Activated T-helper 1 cell treated with anti-CD3 and anti-CD28 coated beads, Interleukin-12 subunit alpha, Interleukin-12 subunit beta, Interleukin-2, Interleukin-4 antibody, amounts not matched to agents 30 ng/mL and 10 ng/mL and 1 ng/mL, durations not matched to agents 14 hours and 24 hours and 36 hours (primary cell): ENCODE measurements at regions of chr11 and their contacts with region 1.

Region 1: DNA sequence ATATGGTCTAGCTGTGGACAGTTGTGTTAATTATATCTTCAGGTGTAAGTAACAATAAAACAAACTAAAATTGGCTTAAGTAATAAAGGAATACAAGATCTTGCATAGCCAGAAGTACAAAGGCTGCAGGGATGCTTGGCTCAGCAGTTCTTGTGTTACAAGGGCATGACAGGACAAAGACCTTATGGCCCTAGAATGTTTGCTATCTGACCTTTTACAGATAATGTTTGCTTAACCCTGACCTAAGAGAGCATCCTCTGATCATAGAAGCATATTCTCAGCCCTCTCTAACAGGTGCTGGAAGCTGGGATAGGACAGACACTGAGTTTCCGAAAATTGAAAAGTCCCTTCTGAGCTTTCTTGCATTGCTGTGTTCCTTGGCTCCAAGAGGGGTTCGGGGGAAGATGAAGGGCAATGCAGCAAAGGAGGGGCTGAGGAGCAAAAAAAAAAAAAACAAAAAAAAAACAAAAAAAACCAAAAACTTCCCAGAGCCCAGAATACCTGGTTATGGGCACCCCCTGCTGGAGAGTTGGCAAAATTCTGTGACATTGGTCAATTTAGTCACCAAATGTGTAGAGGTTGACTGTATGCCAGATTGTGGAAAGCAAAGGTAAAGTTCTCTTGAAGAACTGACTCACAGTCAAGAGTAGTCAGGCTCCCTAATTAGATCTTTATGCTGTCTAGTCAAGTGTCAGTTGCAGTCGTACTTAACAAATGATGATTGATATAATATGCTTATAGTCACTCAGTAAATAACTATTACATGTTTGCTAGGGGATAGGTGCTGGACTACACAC is 10.4 kb upstream of the HIKESHI start:
- DNase-seq: peak; percentile 39
- H3K4me3 Mint-ChIP-seq: peak overlapping the region; percentile 34
- H3K27ac Mint-ChIP-seq: peak overlapping the region; percentile 82
- H3K4me1 Mint-ChIP-seq: peaks cover 61% of the 10 kb centered on the region
- H3K27me3 Mint-ChIP-seq: no peaks in the 10 kb centered on the region

Region 2: GRCh38 chr11:85826116-85826855 is 465.4 kb before region 1 on chr11:
- intact Hi-C with region 1: loop called (anchors 1 kb)
- DNase-seq: no peak
- H3K4me3 Mint-ChIP-seq: peak overlapping the region; percentile 1
- H3K27ac Mint-ChIP-seq: peak overlapping the region; percentile 87
- H3K4me1 Mint-ChIP-seq: peaks cover 74% of the 10 kb centered on the region
- H3K27me3 Mint-ChIP-seq: no peaks in the 10 kb centered on the region

Region 3: GRCh38 chr11:86041975-86042378 is 249.7 kb before region 1 on chr11:
- intact Hi-C with region 1: loop called (anchors 1 kb)
- DNase-seq: peak; percentile 48
- H3K4me3 Mint-ChIP-seq: peak overlapping the region; percentile 43
- H3K27ac Mint-ChIP-seq: peak overlapping the region; percentile 71
- H3K4me1 Mint-ChIP-seq: peaks cover 63% of the 10 kb centered on the region
- H3K27me3 Mint-ChIP-seq: no peaks in the 10 kb centered on the region

Region 4: GRCh38 chr11:86138958-86139357 is 152.7 kb before region 1 on chr11:
- intact Hi-C with region 1: loop called (anchors 1 kb)
- DNase-seq: peak; percentile 37
- H3K4me3 Mint-ChIP-seq: peak overlapping the region; percentile 57
- H3K27ac Mint-ChIP-seq: peak overlapping the region; percentile 81
- H3K4me1 Mint-ChIP-seq: peaks cover 75% of the 10 kb centered on the region
- H3K27me3 Mint-ChIP-seq: no peaks in the 10 kb centered on the region

Region 5: DNA sequence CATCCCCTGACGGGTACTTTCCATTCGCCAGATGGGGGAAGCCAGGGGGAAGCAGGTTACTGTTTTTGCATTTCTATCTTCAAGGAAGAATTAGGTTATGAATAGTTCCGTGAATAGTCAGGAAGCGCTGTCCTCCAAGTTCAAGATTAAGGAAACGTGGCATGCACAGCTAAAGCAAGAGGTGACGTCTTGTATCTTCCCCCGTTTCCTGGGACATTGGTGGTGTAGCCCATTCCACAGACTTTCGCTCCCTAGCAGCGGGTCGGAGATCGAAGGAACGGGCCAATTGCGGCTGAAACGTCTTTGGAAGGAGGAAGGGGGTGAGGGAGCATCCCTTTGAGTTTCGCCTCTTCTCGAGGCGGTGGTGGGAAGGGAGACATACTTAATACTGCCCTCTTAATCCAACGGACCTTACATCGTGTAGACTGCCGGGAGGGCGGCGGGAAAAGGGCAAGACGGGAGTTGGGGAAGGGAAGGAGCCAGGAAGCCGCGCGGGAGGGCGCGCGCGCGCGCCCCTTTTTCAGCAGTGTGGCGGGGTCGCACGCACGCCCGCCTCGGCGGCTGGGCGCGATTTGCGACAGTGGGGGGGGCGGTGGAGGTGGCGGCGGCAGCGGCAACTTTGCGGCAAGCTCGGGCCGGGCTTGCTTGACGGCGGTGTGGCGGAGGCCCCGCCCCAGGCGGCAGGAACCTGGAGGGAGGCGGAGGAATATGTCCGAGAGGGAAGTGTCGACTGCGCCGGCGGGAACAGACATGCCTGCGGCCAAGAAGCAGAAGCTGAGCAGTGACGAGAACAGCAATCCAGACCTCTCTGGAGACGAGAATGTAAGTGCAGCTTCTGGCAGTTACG is 46.9 kb before region 1 on chr11 and contains the start of gene EED:
- intact Hi-C with region 1: loop called (anchors 1 kb)
- DNase-seq: peak; percentile 93
- H3K4me3 Mint-ChIP-seq: no peak within 1 kb of the TSS
- H3K27ac Mint-ChIP-seq: no peak within 1 kb of the TSS
- H3K4me1 Mint-ChIP-seq: peaks cover 43% of the 10 kb centered on the region
- H3K27me3 Mint-ChIP-seq: no peaks in the 10 kb centered on the region
- total RNA-seq, gene EED: 279 and 294 TPM in 2 replicates

Region 6: DNA sequence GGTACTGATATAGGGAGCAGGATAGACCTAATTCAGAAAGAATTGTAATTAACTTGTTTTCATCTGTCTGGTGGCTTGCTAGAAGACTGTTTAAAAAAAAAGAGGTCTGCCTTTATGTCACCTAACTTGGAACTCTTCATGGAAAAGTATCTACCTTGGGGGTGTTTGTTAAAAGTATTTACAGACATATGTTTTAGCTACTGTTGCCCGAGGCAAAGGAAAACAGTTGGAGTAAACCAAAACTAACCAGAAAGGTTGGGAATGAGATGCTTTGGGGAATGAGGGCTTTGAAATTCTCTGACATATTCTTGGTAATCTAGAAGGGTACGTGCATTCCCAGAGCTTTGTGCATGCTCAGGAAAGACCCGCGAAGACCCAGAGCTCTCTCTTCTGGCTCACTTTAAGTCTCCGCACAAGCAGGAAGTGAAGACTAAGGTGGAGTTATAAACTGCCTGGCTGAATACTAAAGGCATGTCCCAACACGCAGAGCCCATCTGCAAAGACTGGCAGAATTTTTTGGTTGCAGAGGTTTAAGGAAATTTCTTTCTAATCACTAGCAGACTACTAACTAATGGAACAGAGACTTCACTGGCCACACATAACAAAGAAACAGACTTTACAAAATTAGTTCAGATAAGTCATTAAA is 43.6 kb after region 1 on chr11:
- intact Hi-C with region 1: no loop called
- DNase-seq: no peak
- H3K4me3 Mint-ChIP-seq: no peak overlapping the region
- H3K27ac Mint-ChIP-seq: no peak overlapping the region
- H3K4me1 Mint-ChIP-seq: no peaks in the 10 kb centered on the region
- H3K27me3 Mint-ChIP-seq: no peaks in the 10 kb centered on the region

Region 7: DNA sequence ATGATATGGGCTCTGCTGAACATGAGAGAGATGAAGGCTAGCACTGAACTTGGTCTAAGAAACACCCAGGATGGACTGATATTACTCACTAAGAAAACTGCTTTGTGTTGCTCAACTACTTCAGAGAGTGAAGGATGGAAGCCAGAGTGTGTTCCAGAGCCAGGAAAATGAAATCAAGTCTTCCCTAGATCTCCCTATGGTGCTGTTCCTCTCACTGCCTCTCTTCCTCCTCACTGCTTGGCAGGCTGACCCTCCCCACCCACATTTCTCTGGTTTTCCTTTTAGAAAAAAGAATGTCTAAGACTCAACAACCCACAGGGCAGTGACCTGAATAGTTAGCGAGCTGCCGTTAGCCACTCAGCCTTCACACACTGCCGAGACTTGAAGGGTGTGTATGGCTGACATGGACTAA is 148.6 kb after region 1 on chr11:
- intact Hi-C with region 1: loop called (anchors 2 kb)
- DNase-seq: no peak
- H3K4me3 Mint-ChIP-seq: no peak overlapping the region
- H3K27ac Mint-ChIP-seq: peak overlapping the region; percentile 71
- H3K4me1 Mint-ChIP-seq: peaks cover 57% of the 10 kb centered on the region
- H3K27me3 Mint-ChIP-seq: no peaks in the 10 kb centered on the region

Region 8: DNA sequence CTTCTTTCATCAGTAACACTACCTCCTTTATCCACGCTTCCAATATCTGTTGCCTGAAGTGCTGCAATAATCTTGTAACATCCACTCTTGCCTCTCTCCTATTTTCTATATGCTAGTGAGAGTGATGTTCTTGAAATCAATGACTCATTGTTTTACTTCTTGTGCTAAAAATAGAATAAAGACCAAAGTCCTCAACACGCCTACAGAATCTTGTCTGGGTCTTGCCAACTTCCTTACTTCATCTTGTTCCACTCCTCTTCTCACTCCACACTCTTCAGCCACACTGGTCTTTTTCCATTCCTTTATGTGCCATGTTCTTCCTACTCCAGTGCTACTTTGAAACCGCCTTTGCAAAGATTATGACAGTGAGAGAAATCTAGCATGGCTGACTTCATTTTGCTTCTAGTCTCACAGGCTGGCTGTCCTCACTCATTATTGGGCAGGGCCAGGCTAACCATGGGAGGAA is 219.5 kb after region 1 on chr11:
- intact Hi-C with region 1: no loop called
- DNase-seq: no peak
- H3K4me3 Mint-ChIP-seq: no peak overlapping the region
- H3K27ac Mint-ChIP-seq: no peak overlapping the region
- H3K4me1 Mint-ChIP-seq: no peaks in the 10 kb centered on the region
- H3K27me3 Mint-ChIP-seq: no peaks in the 10 kb centered on the region

Region 9: GRCh38 chr11:86802601-86803051 is 511.0 kb after region 1 on chr11:
- intact Hi-C with region 1: loop called (anchors 1 kb)
- DNase-seq: no peak
- H3K4me3 Mint-ChIP-seq: peak overlapping the region; percentile 92
- H3K27ac Mint-ChIP-seq: peak overlapping the region; percentile 69
- H3K4me1 Mint-ChIP-seq: peaks cover 77% of the 10 kb centered on the region
- H3K27me3 Mint-ChIP-seq: peaks cover 24% of the 10 kb centered on the region

Region 10: DNA sequence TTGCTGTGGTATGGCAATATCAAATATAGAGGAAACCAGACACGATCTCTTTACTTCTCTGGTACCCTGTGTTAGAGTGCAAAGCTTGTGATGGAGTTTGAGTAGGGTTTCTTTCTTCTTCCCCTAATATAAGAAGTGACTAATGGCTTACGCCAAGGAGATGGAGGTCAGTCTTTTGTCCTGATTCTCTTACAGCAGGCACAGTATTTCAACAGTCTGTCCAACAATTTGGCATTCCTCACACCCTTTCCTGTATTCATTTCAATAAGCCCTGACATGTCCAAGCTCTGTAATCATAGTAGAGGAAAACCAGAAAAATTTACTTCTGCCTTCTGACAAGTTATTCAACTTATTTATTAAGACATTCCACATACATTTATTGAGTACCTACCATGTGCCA is 1292.3 kb after region 1 on chr11:
- intact Hi-C with region 1: no loop called
- DNase-seq: no peak
- H3K4me3 Mint-ChIP-seq: no peak overlapping the region
- H3K27ac Mint-ChIP-seq: no peak overlapping the region
- H3K4me1 Mint-ChIP-seq: no peaks in the 10 kb centered on the region
- H3K27me3 Mint-ChIP-seq: peaks cover 3% of the 10 kb centered on the region